ENCODE measurements at regions of chr5 and their contacts with region 1.

Region 1: GRCh38 chr5:163310997-163311396 is 126.4 kb upstream of the CCNG1 start:
- DNase-seq: no peak
- H3K4me3 ChIP-seq: no peak overlapping the region
- H3K27ac ChIP-seq: no peak overlapping the region
- H3K4me1 ChIP-seq: no peaks in the 10 kb centered on the region
- H3K27me3 ChIP-seq: no peaks in the 10 kb centered on the region
- CTCF ChIP-seq: no peak
- POLR2A ChIP-seq: no peak

Region 2: DNA sequence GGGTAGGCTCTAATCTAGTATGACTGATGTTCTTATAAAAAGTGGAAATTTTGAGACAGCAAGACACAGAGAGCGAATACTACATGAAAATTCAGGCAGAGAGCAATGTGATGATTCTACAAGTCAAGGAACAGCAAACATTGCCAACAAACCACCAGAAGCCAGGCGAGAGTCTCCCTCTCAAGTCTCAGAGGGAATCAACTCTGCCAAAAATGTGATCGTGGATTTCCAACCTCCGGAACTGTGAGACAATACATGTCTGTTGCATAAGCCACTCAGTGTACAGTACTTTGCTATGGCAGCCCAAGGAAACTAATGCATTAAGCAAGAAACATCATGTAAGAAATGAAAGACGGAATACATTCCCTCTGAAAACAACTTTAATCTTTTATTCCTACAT is 74.3 kb after region 1 on chr5:
- intact Hi-C with region 1: no loop called
- DNase-seq: peak; percentile 8 to 22
- H3K4me3 ChIP-seq: no peak overlapping the region
- H3K27ac ChIP-seq: no peak overlapping the region
- H3K4me1 ChIP-seq: peaks cover 0 to under 1% of the 10 kb centered on the region in 2 donors
- H3K27me3 ChIP-seq: no peaks in the 10 kb centered on the region
- CTCF ChIP-seq: no peak
- POLR2A ChIP-seq: no peak

Region 3: DNA sequence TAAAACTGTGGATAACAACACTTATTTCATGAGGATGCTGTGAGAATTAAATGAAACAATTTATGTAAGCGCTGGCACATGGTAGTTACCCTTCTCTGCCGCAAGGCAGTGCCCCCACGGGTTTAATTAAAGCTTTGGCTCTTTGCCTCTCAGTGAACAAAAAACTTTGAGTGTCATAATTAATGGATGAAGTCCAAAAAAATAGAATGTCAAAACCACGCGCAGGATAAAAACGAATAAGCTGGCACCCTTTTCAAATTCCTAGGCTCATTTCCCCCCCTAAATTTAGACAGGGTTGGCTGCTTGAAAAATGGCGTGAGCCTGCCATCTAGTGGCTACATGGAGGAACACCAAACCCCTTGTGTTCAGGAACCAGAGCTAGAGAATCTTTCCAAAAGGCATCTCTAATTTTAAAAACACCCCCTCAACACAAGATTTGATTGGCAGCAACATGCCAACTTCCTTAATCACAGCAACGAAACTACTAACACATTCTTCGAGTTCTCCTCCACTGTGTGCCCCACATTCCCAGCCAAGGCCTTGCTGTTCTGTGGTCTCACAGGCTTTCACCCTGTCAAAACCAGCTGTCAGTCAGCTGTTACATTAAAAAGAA is 97.4 kb after region 1 on chr5:
- intact Hi-C with region 1: loop called (anchors 10 kb)
- DNase-seq: peak; percentile 48 to 66
- H3K4me3 ChIP-seq: no peak overlapping the region
- H3K27ac ChIP-seq: no peak overlapping the region
- H3K4me1 ChIP-seq: no peaks in the 10 kb centered on the region
- H3K27me3 ChIP-seq: no peaks in the 10 kb centered on the region
- CTCF ChIP-seq: peak; percentile 77 to 93 (median 82)
- POLR2A ChIP-seq: no peak

Measured in thyroid gland (tissue), 4 donors.